ENCODE measurements at regions of chr1 and their contacts with region 1.

Region 1: GRCh38 chr1:84573967-84574842 is at the start of gene CTBS:
- DNase-seq: peak; percentile 80
- ATAC-seq: peak; percentile 88
- H3K4me3 ChIP-seq: peak within 1 kb of the TSS; percentile 94
- H3K27ac ChIP-seq: peak within 1 kb of the TSS; percentile 97
- H3K4me1 ChIP-seq: peaks cover 39% of the 10 kb centered on the region
- H3K27me3 ChIP-seq: no peaks in the 10 kb centered on the region
- CTCF ChIP-seq: no peak
- total RNA-seq, gene CTBS: 3.7 and 5.9 TPM in 2 replicates

Region 2: DNA sequence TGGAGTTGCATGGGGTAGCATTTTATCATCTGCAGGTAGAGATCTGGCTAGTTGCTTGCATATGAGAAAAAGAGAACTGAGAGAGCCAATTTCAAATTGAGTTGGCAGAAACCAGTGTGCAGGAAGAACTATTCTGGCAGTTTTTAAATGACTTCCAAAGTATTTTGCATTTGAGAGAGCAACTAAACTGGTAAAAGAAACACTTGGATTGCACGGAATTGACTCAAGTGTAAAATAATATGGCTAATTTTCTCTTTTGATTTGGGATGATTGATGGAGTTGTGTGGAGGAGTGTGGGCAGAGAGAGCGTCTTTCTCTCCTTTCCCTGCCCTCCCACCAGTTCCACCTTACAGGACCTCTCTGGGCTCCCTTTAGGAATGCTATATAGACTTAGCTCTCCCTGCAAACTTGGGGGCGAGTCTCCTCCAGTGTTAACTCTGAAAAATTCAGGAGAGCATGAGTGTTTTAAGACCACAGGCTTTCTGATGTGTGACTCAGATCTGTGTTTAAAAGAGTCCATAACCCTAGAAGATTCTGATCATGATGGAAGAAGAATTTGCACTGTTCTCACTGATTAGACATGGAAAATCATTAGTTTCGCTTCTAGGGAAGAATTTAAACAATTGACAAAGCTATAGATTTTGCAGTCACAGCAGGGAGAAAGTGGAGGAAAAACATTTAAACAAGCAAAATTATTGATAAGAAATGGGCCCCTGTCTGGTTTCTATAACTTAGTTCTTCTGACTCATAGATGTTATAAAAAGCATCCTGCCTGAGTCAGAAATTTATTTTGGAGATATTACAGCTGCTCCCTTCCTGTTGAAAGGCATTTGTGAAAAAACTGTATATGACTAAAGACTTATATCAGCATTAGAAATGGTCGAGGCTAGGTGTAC is 24.9 kb after region 1 on chr1:
- CTCF ChIA-PET with region 1: no interaction called
- POLR2A ChIA-PET with region 1: interaction called, 4 read pairs
- intact Hi-C with region 1: loop called (anchors 1 kb)
- DNase-seq: peak; percentile 92
- ATAC-seq: peak; percentile 64
- H3K4me3 ChIP-seq: peak overlapping the region; percentile 47
- H3K27ac ChIP-seq: peak overlapping the region; percentile 97
- H3K4me1 ChIP-seq: peaks cover 37% of the 10 kb centered on the region
- H3K27me3 ChIP-seq: no peaks in the 10 kb centered on the region
- CTCF ChIP-seq: no peak

Region 3: DNA sequence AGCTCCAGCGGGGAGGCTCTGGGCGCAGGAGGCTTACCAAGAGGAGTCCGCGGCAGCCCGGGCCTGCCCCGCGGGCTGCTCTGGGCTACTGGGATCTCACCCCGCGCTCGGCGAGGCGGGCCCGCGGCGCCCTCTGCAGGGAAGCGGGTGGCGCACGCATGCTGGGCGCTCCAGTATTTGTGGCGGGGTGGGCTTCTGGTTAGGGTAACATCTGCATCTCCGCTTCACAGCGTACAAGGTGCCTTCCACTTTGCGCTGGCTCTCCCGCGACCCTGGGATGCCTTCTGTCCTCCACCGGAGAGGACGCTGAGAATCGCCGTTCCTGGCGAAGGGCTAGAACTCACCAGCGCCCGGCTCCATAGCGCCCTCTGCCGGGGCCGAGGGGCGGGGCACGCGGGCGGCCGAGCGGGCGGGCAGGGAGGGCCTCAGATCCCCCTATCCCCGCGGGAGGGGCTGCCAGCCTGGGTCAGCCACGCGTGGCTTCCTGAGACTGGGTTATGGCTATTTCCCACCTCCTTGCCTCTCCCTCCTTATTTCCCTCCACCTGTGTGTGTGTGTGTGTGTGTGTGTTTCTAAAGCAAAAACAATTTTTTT is 46.6 kb after region 1 on chr1:
- CTCF ChIA-PET with region 1: no interaction called
- POLR2A ChIA-PET with region 1: no interaction called
- intact Hi-C with region 1: loop called (anchors 1 kb)
- DNase-seq: peak; percentile 84
- ATAC-seq: peak; percentile 83
- H3K4me3 ChIP-seq: peak overlapping the region; percentile 81
- H3K27ac ChIP-seq: peak overlapping the region; percentile 84
- H3K4me1 ChIP-seq: peaks cover 24% of the 10 kb centered on the region
- H3K27me3 ChIP-seq: no peaks in the 10 kb centered on the region
- CTCF ChIP-seq: peak; percentile 98

Region 4: GRCh38 chr1:84668185-84668584 is 94.0 kb after region 1 on chr1:
- CTCF ChIA-PET with region 1: no interaction called
- POLR2A ChIA-PET with region 1: no interaction called
- intact Hi-C with region 1: loop called (anchors 10 kb)
- DNase-seq: peak; percentile 28
- ATAC-seq: peak; percentile 66; the same call in 1 of the 2 replicates
- H3K4me3 ChIP-seq: no peak overlapping the region
- H3K27ac ChIP-seq: no peak overlapping the region
- H3K4me1 ChIP-seq: 0 out of 2 replicates have a peak, but pooled peaks cover 6% of the 10 kb centered on the region
- H3K27me3 ChIP-seq: no peaks in the 10 kb centered on the region
- CTCF ChIP-seq: peak; percentile 62

Region 5: GRCh38 chr1:85484264-85484663 is 910.1 kb after region 1 on chr1:
- CTCF ChIA-PET with region 1: no interaction called
- POLR2A ChIA-PET with region 1: no interaction called
- intact Hi-C with region 1: no loop called
- DNase-seq: peak; percentile 88
- ATAC-seq: peak; percentile 77
- H3K4me3 ChIP-seq: no peak overlapping the region
- H3K27ac ChIP-seq: no peak overlapping the region
- H3K4me1 ChIP-seq: peaks cover 23% of the 10 kb centered on the region
- H3K27me3 ChIP-seq: no peaks in the 10 kb centered on the region
- CTCF ChIP-seq: no peak